Activated CD4-positive, alpha-beta T cell treated with anti-CD3 and anti-CD28 coated beads, Interleukin-2, amount 10 ng/mL, durations not matched to agents 24 days and 14 days (primary cell): ENCODE measurements at regions of chr3 and their contacts with region 1.

Region 1: DNA sequence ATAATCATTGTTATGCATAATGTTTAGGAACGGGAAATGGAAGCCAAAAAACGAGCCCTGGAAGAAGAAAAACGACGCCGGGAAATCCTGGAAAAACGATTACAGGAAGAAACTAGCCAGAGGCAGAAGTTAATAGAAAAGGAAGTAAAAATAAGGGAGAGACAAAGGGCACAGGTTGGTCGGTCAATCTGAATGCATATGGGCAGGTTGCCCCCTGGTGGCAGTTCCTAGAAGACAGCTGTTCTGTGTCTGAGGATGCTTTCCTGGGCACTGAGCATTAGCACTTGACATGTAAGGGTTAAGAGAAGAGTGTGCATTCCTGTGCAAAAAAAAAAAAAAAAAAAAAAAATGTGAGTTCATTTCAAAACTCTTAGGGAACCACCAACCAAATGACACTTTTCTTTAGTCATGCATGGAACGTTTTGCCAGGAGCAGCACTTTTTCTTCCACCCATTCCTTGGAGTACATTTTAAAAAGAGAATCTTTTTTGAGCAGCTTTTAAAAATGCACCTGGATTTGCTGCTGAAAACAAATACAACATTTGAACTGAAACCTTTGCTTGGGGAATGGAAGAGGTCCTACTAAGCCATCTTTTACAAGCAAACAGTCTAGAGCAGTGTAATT is 11.1 kb upstream of the ABHD10 start:
- DNase-seq: peak; percentile 94
- H3K4me3 Mint-ChIP-seq: no peak overlapping the region
- H3K27ac Mint-ChIP-seq: no peak overlapping the region
- H3K4me1 Mint-ChIP-seq: peaks cover 15% of the 10 kb centered on the region
- H3K27me3 Mint-ChIP-seq: peaks cover 1% of the 10 kb centered on the region

Region 2: DNA sequence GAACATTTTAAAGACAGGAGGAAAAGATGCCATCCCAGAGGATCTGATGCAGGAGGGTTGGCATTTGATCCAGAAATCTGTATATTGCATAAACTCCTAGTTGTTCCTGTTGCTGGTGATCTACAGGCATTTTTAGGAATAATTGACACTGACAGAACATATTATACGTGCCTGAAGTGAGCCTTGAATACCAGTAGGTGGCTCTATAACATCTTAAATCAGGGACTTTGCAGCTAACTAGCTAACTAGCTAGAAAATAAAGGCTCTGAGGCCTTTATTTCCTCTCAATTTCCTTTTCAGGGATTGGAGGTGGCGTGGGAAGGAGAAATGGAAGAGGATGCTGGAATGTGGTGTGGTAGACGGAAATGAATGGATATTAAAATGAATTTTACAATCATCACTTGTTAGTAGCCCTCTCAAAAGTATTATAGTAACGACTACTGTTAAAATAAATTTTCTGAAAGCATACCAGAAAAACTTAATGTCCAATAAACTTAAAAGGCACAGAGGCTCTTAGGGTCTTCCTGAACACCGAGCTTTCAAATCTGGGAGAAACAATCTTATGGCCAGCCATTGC is 298.8 kb before region 1 on chr3:
- intact Hi-C with region 1: loop called (anchors 1 kb)
- DNase-seq: peak; percentile 69
- H3K4me3 Mint-ChIP-seq: peak overlapping the region; percentile 22
- H3K27ac Mint-ChIP-seq: peak overlapping the region; percentile 73
- H3K4me1 Mint-ChIP-seq: peaks cover 69% of the 10 kb centered on the region
- H3K27me3 Mint-ChIP-seq: no peaks in the 10 kb centered on the region

Region 3: GRCh38 chr3:111859974-111860859 is 107.5 kb before region 1 on chr3:
- intact Hi-C with region 1: loop called (anchors 2 kb)
- DNase-seq: peak; percentile 84
- H3K4me3 Mint-ChIP-seq: peak overlapping the region; percentile 89
- H3K27ac Mint-ChIP-seq: peak overlapping the region; percentile 18
- H3K4me1 Mint-ChIP-seq: peaks cover 21% of the 10 kb centered on the region
- H3K27me3 Mint-ChIP-seq: peaks cover 74% of the 10 kb centered on the region

Region 4: GRCh38 chr3:112038863-112039262 is 71.1 kb after region 1 on chr3:
- intact Hi-C with region 1: no loop called
- DNase-seq: no peak
- H3K4me3 Mint-ChIP-seq: no peak overlapping the region
- H3K27ac Mint-ChIP-seq: no peak overlapping the region
- H3K4me1 Mint-ChIP-seq: no peaks in the 10 kb centered on the region
- H3K27me3 Mint-ChIP-seq: peaks cover 8% of the 10 kb centered on the region